PC-3 (cell line): ENCODE measurements at regions of chr1 and their contacts with region 1.

Region 1: DNA sequence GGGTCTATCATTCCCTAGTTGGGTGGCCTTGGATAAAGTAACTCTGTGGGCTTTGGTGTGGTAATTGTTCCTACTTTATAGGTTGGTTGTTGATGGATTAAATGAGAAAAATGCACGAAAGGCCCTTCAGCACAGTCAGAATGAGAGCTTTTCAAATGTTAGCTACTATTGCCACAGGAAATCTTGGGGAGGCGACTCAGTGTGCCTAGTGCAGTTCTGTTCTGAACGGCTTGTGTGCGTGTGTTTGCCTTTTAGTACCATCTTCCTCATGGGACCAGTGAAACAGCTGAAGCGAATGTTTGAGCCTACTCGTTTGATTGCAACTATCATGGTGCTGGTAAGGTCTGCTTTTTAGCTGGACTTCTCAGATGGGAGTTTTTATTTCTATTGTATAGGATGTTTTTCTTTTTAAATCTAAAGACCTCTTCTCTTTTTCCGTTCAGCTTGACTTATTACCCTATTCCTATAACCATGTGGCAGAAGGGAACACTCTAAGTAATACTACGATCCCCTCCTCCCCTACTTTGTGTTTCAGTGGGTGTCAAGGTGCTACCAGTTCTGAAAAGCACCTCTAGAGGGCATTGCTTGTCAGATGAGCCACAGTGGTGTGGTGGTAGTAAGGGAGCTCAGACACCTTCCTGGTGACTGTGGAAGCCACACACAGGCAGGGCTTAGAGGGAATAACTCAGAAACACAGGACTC is 9.2 kb downstream of the SFT2D2 start:
- DNase-seq: peak; percentile 84
- ATAC-seq: peak; percentile 93
- H3K4me3 ChIP-seq: no peak overlapping the region
- H3K27ac ChIP-seq: no peak overlapping the region
- H3K4me1 ChIP-seq: peaks cover 18% of the 10 kb centered on the region
- H3K27me3 ChIP-seq: no peaks in the 10 kb centered on the region
- CTCF ChIP-seq: peak; percentile 92

Region 2: DNA sequence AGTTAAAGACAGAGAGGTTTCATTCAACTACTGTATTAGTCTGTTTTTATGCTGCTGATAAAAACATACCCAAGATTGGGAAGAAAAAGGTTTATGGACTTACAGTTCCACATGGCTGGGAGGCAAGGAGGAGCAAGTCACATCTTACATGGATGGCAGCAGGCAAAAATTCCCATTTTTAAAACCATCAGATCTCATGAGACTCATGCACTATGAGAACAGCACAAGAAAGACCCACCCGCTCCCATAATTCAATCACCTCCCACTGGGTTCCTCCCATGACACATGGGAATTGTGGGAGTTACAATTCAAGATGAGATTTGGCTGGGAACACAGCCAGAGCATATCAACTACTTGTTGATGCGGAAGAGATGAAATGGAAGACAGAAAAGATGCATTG is 107.5 kb before region 1 on chr1:
- CTCF ChIA-PET with region 1: no interaction called
- POLR2A ChIA-PET with region 1: no interaction called
- intact Hi-C with region 1: no loop called
- DNase-seq: no peak
- ATAC-seq: no peak
- H3K4me3 ChIP-seq: no peak overlapping the region
- H3K27ac ChIP-seq: no peak overlapping the region
- H3K4me1 ChIP-seq: no peaks in the 10 kb centered on the region
- H3K27me3 ChIP-seq: no peaks in the 10 kb centered on the region
- CTCF ChIP-seq: no peak

Region 3: DNA sequence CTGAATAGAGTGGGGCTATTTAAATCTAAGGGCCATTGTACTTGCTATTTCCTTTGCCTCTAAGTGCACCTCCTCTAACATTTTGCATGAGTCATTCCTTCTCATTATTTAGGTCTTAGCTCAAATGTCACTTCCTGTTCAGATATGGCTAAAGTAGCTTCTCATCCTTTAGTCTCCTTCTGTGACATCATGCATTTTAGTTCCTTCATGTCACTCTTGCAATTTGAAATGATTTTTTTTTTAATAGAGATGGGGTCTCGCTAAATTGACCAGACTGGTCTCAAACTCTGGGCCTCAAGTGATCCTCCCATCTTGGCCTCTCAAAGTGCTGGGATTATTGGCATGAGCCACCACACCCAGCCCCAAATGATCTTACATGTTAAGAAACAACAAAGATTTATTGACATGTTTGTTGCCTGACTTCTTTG is 52.3 kb after region 1 on chr1:
- CTCF ChIA-PET with region 1: no interaction called
- POLR2A ChIA-PET with region 1: no interaction called
- intact Hi-C with region 1: no loop called
- DNase-seq: peak; percentile 78
- ATAC-seq: peak; percentile 19; the same call in 1 of the 2 replicates
- H3K4me3 ChIP-seq: no peak overlapping the region
- H3K27ac ChIP-seq: peak overlapping the region; percentile 71
- H3K4me1 ChIP-seq: peaks cover 50% of the 10 kb centered on the region
- H3K27me3 ChIP-seq: no peaks in the 10 kb centered on the region
- CTCF ChIP-seq: no peak

Region 4: DNA sequence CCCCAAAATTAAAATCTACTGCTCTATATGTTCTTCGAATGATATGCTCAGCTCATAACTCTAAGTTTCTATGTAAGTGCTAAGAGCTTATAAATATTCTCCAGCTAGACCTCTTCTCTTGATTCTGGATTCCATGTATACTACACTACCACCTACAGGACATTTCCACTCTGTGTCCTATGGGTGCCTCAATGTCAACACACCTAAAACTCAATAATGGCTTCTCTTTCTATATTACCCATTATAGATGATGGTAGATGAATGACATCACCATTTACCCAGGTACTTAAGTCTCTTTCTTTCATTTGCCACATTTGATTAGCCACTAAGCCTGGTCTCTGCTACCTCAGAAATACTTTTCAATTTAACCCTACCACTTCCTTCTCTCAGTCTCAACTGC is 86.9 kb after region 1 on chr1:
- CTCF ChIA-PET with region 1: interaction called, 55 read pairs
- POLR2A ChIA-PET with region 1: no interaction called
- intact Hi-C with region 1: loop called (anchors 1 kb)
- DNase-seq: peak; percentile 75
- ATAC-seq: peak; percentile 79
- H3K4me3 ChIP-seq: no peak overlapping the region
- H3K27ac ChIP-seq: no peak overlapping the region
- H3K4me1 ChIP-seq: peaks cover 17% of the 10 kb centered on the region
- H3K27me3 ChIP-seq: no peaks in the 10 kb centered on the region
- CTCF ChIP-seq: peak; percentile 84